Left lung (tissue), 14 donors: ENCODE measurements at regions of chr14 and their contacts with region 1.

Region 1: GRCh38 chr14:38721822-38722431 is 381.1 kb downstream of the SEC23A start:
- DNase-seq: peak in 3 of 4 donors; percentile 41 to 61 (median 44)
- ATAC-seq: peak; percentile 98
- H3K4me3 ChIP-seq: no peak overlapping the region
- H3K27ac ChIP-seq: no peak overlapping the region
- H3K4me1 ChIP-seq: no peaks in the 10 kb centered on the region
- H3K27me3 ChIP-seq: no peaks in the 10 kb centered on the region
- CTCF ChIP-seq: peak; percentile 54 to 80

Region 2: DNA sequence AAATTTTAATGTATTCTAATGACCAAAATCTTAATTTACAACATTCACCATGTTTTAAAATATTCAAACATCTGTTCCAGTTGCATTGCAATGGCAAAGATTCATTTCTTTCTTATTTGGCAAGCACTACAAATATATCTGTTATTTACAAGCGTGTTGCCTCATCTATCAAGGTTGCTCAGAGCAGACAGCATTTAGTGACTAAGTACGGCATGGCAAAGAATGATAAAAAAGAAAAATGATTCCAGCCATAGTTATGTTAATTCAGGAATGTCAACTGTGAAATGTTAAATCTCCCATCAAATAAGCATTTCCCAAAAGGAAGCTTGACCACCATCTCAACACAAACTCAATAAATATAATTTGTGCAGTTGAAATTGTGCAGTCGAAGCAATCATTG is 69.0 kb after region 1 on chr14:
- intact Hi-C with region 1: no loop called
- DNase-seq: no peak
- ATAC-seq: no peak
- H3K4me3 ChIP-seq: no peak overlapping the region
- H3K27ac ChIP-seq: no peak overlapping the region
- H3K4me1 ChIP-seq: no peaks in the 10 kb centered on the region
- H3K27me3 ChIP-seq: no peaks in the 10 kb centered on the region
- CTCF ChIP-seq: no peak

Region 3: GRCh38 chr14:39015360-39015961 is 293.5 kb after region 1 on chr14:
- intact Hi-C with region 1: loop called in 1 of 2 experiments (anchors 10 kb)
- DNase-seq: peak in 1 of 4 donors; percentile 66
- ATAC-seq: peak; percentile 83
- H3K4me3 ChIP-seq: no peak overlapping the region
- H3K27ac ChIP-seq: no peak overlapping the region
- H3K4me1 ChIP-seq: no peaks in the 10 kb centered on the region
- H3K27me3 ChIP-seq: no peaks in the 10 kb centered on the region
- CTCF ChIP-seq: peak; percentile 60 to 62